ENCODE measurements at regions of chr1 and their contacts with region 1.

Region 1: DNA sequence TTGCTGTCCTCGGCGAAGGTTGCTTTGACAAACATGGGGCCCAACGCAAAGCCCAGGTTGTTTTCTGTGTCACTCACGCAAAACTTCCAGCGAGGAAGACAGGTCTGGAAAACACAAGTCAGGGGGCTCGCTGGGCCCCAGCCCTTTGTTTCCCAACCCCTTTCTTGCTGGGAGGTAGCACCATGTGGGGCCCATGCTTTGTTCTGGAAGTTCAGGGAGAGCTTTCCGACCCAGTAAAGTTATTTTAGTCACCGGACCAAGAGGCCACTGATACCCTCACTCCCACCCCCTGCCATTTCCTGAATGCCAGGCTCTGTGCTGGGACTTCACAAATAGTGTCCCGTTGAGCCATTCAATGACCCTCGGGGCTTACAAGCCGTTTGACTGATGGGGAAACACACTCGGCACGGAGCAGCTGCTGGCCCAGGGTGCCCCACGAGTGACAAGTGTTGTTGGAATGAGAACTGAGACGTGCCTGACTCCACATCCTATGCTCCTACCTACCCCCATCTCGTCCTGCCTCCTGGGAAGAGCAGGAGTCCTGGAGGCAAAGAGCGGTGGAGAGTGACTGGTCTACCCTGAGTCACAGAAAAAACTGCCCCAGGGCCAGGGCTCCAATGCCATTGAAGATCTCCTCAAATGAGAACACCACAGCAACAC is 52.0 kb downstream of the ECE1 start:
- DNase-seq: no peak
- ATAC-seq: no peak
- H3K4me3 ChIP-seq: no peak overlapping the region
- H3K27ac ChIP-seq: peak overlapping the region in 11 of 12 donors; percentile 44 to 73 (median 55)
- H3K4me1 ChIP-seq: peaks cover 0 to 33% (median 8%) of the 10 kb centered on the region in 12 donors
- H3K27me3 ChIP-seq: no peaks in the 10 kb centered on the region
- CTCF ChIP-seq: no peak
- POLR2A ChIP-seq: no peak

Region 2: GRCh38 chr1:21355956-21356355 is 117.7 kb after region 1 on chr1:
- intact Hi-C with region 1: loop called in 1 of 10 experiments (anchors 5 kb)
- DNase-seq: no peak
- ATAC-seq: peak in 1 of 4 donors; percentile 27
- H3K4me3 ChIP-seq: no peak overlapping the region
- H3K27ac ChIP-seq: no peak overlapping the region
- H3K4me1 ChIP-seq: no peaks in the 10 kb centered on the region
- H3K27me3 ChIP-seq: no peaks in the 10 kb centered on the region
- CTCF ChIP-seq: no peak
- POLR2A ChIP-seq: no peak

Measured in heart left ventricle (tissue), 16 donors.